Head of caudate nucleus (tissue), 42 donors: ENCODE measurements at regions of chr7 and their contacts with region 1.

Region 1: DNA sequence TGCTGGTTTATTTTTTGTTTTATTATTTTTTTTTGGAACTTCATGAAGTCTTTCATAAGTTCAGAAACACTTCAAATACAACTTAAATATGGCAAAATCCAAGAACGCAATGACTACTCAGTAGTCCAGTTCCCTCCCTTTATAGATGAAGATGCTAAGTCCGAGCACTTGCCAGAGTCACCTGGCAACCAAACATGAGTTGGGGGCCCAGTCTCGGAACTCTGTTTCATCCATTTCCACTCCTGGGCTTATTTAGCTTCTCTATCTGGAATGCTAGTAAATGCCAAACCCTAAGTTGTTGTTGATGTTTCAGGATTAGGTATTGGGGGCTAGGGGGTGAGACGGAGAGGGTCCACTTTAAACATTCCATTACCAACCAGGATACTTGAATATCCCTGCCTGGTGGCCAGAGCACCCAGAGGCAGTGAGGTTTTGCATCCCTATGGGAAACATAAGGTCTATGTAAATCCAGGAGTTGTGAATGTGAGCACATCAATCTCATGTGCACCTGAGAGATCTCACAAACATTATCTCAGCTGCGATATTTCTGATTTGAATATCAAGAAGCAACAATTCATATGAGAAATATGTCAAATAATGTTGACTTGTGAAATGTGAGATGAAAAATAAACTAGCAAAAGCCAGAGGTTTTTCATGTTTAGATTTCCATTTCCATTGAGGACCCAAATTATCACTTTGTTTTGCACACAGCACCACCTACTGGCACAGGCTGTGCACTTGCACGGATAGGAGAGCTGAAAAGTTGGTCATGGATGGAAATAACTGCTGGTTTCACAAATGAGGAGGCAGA is 129.3 kb downstream of the PKD1L1 start:
- DNase-seq: peak; percentile 45 to 89 (median 76)

Region 2: GRCh38 chr7:47266131-47266706 is 552.8 kb before region 1 on chr7:
- intact Hi-C with region 1: loop called (anchors 10 kb)
- DNase-seq: peak in 41 of 42 donors; percentile 37 to 85 (median 63)

Region 3: DNA sequence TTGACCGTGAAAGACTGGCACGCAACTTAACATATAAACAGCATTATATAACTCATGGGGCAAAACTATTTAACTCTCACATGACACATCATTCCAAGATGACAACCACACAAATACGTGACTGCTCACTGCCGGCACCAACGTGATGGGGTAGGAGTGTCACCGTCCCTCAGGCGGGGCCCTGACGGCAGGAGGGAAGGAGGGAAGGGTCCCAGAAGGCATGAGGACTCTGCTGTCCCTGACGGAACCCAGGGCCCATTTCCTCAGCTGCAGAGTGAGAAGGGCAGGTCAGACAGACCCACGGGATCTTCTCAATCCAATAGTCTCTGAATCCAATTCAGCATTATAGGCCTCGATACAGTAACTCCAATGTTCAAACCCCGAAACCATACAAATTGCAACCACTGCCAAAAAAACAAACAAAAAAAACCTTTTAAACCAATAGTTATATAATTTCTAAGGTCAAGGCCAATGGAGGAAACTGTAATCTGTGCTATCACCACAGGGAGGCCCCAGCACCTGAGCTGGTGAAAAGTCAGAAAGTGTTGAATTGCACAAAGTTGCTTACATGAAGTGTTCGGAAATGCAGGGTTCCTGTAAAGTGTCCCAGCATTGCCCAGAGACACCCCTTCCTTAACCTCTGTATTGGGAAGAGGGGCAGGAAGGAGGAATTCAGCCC is 374.5 kb before region 1 on chr7:
- intact Hi-C with region 1: loop called (anchors 10 kb)
- DNase-seq: peak in 14 of 42 donors; percentile 30 to 61 (median 44)

Region 4: GRCh38 chr7:47743965-47744591 is 74.9 kb before region 1 on chr7:
- intact Hi-C with region 1: no loop called
- DNase-seq: peak in 1 of 42 donors; percentile 34